ENCODE measurements at regions of chr10 and their contacts with region 1.

Region 1: DNA sequence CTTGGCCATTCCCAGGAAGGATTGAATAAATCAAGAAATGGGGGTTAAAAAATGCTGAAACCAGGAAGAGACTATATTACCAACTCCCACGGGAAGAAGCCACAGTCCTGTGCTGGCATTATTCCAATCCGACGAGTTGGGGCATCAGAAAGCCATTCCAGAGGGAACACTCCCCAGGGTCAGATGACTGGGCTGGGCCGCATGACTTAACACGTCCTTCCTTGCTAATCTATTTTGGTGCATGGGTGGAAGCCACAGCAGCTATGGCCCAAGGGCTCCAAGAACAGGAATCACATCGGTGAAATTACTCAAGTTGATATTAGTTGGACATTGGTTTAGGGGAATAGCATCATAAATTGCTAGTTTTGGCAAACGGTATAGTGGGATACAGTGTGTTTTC is 592.9 kb upstream of the NRP1 start:
- DNase-seq: no peak
- ATAC-seq: no peak
- H3K4me3 ChIP-seq: no peak overlapping the region
- H3K27ac ChIP-seq: no peak overlapping the region
- H3K4me1 ChIP-seq: no peaks in the 10 kb centered on the region
- H3K27me3 ChIP-seq: no peaks in the 10 kb centered on the region
- CTCF ChIP-seq: no peak
- POLR2A ChIP-seq: no peak

Region 2: DNA sequence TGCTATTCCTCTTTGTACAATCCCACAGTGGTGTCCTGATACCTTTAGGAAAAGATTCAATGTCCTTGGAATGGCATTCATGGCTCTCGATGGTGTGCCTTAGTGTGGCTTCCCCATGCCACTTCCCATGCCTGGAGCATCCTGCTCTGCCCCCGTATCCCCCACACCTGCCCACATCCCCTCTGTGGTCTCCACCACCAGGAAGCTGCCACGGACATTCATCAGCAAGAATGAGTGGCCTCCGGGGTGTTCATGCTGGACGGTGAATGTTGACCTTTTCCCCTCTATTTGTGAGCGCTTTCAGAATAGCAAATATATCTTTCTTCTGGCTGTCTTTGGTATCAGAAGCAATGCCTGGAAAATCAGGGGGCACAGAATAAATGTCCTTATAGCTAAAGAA is 330.9 kb before region 1 on chr10:
- intact Hi-C with region 1: loop called in 1 of 2 experiments (anchors 5 kb)
- DNase-seq: no peak
- ATAC-seq: no peak
- H3K4me3 ChIP-seq: no peak overlapping the region
- H3K27ac ChIP-seq: no peak overlapping the region
- H3K4me1 ChIP-seq: no peaks in the 10 kb centered on the region
- H3K27me3 ChIP-seq: no peaks in the 10 kb centered on the region
- CTCF ChIP-seq: no peak
- POLR2A ChIP-seq: no peak

Region 3: DNA sequence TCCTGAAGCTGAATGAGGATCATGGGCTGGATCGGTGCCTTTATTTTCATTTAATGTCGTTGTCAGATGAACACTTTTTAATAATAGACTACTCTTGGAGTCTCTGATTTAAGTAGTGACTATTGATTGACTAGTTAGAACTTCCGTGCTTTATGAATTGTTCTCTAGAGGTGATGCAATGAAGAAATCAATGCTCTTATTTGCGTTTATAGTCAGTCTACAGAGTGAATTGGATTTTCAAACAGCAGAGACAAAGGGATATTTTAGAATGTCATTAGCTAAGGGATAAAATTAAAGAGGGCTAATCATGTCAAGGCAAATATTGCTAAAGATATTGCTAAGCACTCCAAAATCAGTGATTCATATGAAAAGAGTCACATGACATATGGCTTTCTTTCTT is 59.2 kb after region 1 on chr10:
- intact Hi-C with region 1: no loop called
- DNase-seq: no peak
- ATAC-seq: peak in 3 of 4 donors; percentile 40 to 69 (median 62)
- H3K4me3 ChIP-seq: no peak overlapping the region
- H3K27ac ChIP-seq: no peak overlapping the region
- H3K4me1 ChIP-seq: no peaks in the 10 kb centered on the region
- H3K27me3 ChIP-seq: no peaks in the 10 kb centered on the region
- CTCF ChIP-seq: no peak
- POLR2A ChIP-seq: no peak

Measured in right lobe of liver (tissue), 6 donors.